PC-3 (cell line): ENCODE measurements at regions of chr19 and their contacts with region 1.

Region 1: GRCh38 chr19:4267101-4267900 is 11.8 kb upstream of the SHD start:
- DNase-seq: peak; percentile 64
- ATAC-seq: peak; percentile 74
- H3K4me3 ChIP-seq: no peak overlapping the region
- H3K27ac ChIP-seq: no peak overlapping the region
- H3K4me1 ChIP-seq: no peaks in the 10 kb centered on the region
- H3K27me3 ChIP-seq: no peaks in the 10 kb centered on the region
- CTCF ChIP-seq: peak; percentile 65

Region 2: GRCh38 chr19:4352701-4353121 is 85.4 kb after region 1 on chr19:
- CTCF ChIA-PET with region 1: interaction called, 23 read pairs
- POLR2A ChIA-PET with region 1: no interaction called
- intact Hi-C with region 1: loop called (anchors 5 kb)
- DNase-seq: peak; percentile 57
- ATAC-seq: peak; percentile 55; the same call in 1 of the 2 replicates
- H3K4me3 ChIP-seq: no peak overlapping the region
- H3K27ac ChIP-seq: no peak overlapping the region
- H3K4me1 ChIP-seq: no peaks in the 10 kb centered on the region
- H3K27me3 ChIP-seq: no peaks in the 10 kb centered on the region
- CTCF ChIP-seq: peak; percentile 65